Activated CD4-positive, alpha-beta memory T cell treated with anti-CD3 and anti-CD28 coated beads for 36 hours (primary cell): ENCODE measurements at regions of chr17 and their contacts with region 1.

Region 1: DNA sequence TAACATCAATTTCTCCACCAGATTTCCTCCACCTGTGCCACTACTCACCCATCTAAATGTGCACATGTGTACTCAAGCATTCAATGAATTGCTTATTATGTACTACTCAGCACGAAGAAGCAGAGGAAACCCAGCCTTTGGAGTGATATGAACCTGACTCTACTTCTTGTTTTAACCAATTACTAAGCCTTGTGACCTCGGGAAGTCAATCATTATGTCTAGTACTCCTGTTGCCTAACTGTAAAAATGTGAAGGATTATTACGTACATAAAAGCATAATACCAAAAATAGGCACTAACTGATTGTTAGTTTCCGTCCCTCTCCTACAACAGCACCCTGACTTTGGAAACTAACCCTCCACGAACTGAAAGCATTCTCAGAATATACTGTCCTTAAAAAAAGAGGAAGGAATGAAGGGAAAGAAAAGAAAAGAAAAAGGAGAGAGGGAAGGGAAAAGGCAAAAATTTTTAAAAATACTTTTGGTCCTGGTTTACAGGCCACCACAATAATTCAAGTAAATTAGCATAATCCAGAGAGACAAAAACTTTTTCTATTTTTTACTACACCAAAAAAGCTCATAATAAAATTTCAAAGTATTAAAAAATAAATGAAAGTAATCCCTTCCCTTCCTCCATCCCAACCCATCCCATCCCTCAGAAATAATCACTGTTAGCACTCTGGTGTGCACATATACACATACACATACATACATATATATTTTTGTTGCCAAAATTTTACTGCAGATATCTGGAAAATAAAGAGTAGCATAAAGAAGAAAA is 53.6 kb downstream of the KANSL1 start:
- DNase-seq: no peak
- H3K4me3 Mint-ChIP-seq: no peak overlapping the region
- H3K27ac Mint-ChIP-seq: no peak overlapping the region
- H3K4me1 Mint-ChIP-seq: peaks cover 92% of the 10 kb centered on the region
- H3K27me3 Mint-ChIP-seq: no peaks in the 10 kb centered on the region

Region 2: DNA sequence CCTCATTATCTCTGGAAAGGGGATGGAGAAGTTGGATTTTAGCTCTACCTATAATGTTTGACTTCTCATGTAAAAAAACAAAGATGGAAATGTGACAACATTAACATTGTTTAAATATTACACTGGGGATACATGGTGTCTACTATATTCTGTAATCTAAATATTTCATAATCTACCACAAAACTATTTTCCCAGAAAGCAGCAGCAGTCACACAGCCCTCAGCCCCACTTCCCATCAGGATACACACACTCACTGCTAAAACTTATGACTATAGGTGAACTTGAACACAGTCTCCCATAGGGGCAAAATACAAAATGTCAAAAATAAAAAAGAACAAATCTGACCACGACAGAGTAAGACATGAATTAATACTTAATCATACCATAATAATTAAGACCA is 42.1 kb before region 1 on chr17:
- CTCF ChIA-PET with region 1: no interaction called
- POLR2A ChIA-PET with region 1: no interaction called
- intact Hi-C with region 1: loop called (anchors 5 kb)
- DNase-seq: no peak
- H3K4me3 Mint-ChIP-seq: no peak overlapping the region
- H3K27ac Mint-ChIP-seq: no peak overlapping the region
- H3K4me1 Mint-ChIP-seq: peaks cover 63% of the 10 kb centered on the region
- H3K27me3 Mint-ChIP-seq: no peaks in the 10 kb centered on the region

Region 3: GRCh38 chr17:46184696-46185095 is 45.1 kb after region 1 on chr17:
- CTCF ChIA-PET with region 1: interaction called, 29 read pairs
- POLR2A ChIA-PET with region 1: no interaction called
- intact Hi-C with region 1: no loop called
- DNase-seq: no peak
- H3K4me3 Mint-ChIP-seq: no peak overlapping the region
- H3K27ac Mint-ChIP-seq: no peak overlapping the region
- H3K4me1 Mint-ChIP-seq: peaks cover 90% of the 10 kb centered on the region
- H3K27me3 Mint-ChIP-seq: no peaks in the 10 kb centered on the region